ENCODE measurements at regions of chr13 and their contacts with region 1.

Region 1: GRCh38 chr13:98998831-98999638 is 21.2 kb upstream of the DOCK9 start:
- DNase-seq: peak; percentile 36
- H3K4me3 Mint-ChIP-seq: peak overlapping the region; percentile 41
- H3K27ac Mint-ChIP-seq: peak overlapping the region; percentile 50
- H3K4me1 Mint-ChIP-seq: peaks cover 73% of the 10 kb centered on the region
- H3K27me3 Mint-ChIP-seq: no peaks in the 10 kb centered on the region

Region 2: GRCh38 chr13:98986226-98986846 is 12.7 kb before region 1 on chr13:
- intact Hi-C with region 1: loop called (anchors 1 kb)
- DNase-seq: no peak
- H3K4me3 Mint-ChIP-seq: no peak overlapping the region
- H3K27ac Mint-ChIP-seq: no peak overlapping the region
- H3K4me1 Mint-ChIP-seq: peaks cover 45% of the 10 kb centered on the region
- H3K27me3 Mint-ChIP-seq: no peaks in the 10 kb centered on the region

Region 3: DNA sequence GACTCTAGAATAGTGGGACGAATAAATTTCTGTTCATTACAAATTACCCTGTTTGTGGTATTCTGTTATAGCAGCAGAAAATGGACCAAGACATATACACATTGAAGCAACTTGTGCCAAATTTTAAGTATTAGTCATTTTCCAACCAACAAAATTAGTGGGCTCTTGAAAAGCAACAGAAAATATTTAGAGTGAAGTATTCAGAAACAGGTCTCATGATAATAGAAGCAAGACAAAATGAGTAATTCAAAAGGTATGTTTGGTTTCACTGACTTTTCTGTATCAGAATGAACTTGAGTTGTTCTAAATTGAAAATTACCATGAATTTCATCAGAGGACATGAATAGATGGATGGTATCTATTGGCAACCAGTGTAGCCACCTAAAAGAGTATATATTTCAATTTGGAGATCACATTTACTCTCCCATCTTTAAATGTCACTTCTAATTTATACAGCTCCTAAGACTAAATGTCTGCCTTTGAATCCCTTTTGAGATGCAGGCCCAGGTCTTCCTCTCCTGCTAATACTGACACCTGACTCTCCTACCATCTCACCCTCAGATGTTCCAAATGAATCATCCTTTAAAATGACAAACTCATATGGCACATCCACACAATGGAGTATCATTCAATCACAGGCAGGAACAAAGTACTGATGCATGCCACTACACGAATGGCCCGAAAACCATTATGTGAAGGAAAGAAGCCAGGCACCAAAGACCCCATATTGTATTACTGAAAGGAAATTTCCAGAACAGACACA is 19.6 kb after region 1 on chr13:
- intact Hi-C with region 1: loop called (anchors 2 kb)
- DNase-seq: no peak
- H3K4me3 Mint-ChIP-seq: no peak overlapping the region
- H3K27ac Mint-ChIP-seq: peak overlapping the region; percentile 4
- H3K4me1 Mint-ChIP-seq: peaks cover 37% of the 10 kb centered on the region
- H3K27me3 Mint-ChIP-seq: no peaks in the 10 kb centered on the region

Measured in activated T-helper 2 cell treated with anti-CD3 and anti-CD28 coated beads, Interferon-gamma antibody, Interleukin-2, Interleukin-4, amounts not matched to agents 10 μg/mL and 5 μg/mL and 100 μg/mL, durations not matched to agents 14 hours and 24 hours and 36 hours (primary cell).